Pancreas (tissue), 10 donors: ENCODE measurements at regions of chr14 and their contacts with region 1.

Region 1: DNA sequence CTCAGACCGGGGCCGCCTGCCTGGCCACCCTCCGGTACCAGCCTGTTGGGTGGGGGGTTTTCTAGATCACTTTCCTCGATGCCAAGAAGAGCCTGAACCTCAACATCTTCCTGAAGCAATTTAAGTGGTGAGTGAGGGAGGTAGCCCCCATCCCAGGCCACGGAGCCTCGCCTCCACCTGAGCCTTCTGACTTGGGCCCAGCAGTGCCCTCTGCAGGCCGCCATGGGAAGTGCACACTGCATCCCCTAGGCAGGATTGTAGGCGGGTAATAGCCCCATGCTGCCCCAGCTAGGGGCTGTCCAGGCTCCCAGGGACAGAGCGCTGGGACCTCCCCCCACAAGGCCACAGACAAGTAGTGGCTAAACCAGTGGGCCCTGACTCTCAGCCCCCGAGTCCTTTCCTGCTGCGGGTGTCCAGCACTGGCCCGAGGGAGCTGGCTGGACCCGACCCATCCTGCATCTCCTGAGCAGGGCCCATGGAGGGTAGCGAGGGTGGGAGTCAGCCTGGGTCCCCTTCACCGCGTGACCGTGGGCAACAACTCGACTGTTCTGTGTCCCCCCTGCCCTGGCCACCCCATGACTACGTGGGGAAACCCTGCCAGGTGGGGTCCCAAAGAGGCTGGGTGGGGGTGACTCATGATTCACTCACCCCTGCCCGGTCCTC is 15.3 kb upstream of the ADSS1 start:
- DNase-seq: peak in 5 of 6 donors; percentile 45 to 90 (median 77)
- ATAC-seq: peak; percentile 71 to 93 (median 86)
- H3K4me3 ChIP-seq: no peak overlapping the region
- H3K27ac ChIP-seq: no peak overlapping the region
- H3K4me1 ChIP-seq: no peaks in the 10 kb centered on the region
- H3K27me3 ChIP-seq: no peaks in the 10 kb centered on the region
- CTCF ChIP-seq: peak; percentile 97 to 99 (median 98)

Region 2: GRCh38 chr14:104650057-104650981 is 58.4 kb before region 1 on chr14:
- intact Hi-C with region 1: loop called (anchors 5 to 10 kb)
- DNase-seq: peak; percentile 39 to 87 (median 68)
- ATAC-seq: peak; percentile 75 to 96 (median 92)
- H3K4me3 ChIP-seq: peak overlapping the region in 2 of 4 donors; percentile 30 to 41
- H3K27ac ChIP-seq: no peak overlapping the region
- H3K4me1 ChIP-seq: no peaks in the 10 kb centered on the region
- H3K27me3 ChIP-seq: no peaks in the 10 kb centered on the region
- CTCF ChIP-seq: peak; percentile 83 to 98 (median 94)

Region 3: DNA sequence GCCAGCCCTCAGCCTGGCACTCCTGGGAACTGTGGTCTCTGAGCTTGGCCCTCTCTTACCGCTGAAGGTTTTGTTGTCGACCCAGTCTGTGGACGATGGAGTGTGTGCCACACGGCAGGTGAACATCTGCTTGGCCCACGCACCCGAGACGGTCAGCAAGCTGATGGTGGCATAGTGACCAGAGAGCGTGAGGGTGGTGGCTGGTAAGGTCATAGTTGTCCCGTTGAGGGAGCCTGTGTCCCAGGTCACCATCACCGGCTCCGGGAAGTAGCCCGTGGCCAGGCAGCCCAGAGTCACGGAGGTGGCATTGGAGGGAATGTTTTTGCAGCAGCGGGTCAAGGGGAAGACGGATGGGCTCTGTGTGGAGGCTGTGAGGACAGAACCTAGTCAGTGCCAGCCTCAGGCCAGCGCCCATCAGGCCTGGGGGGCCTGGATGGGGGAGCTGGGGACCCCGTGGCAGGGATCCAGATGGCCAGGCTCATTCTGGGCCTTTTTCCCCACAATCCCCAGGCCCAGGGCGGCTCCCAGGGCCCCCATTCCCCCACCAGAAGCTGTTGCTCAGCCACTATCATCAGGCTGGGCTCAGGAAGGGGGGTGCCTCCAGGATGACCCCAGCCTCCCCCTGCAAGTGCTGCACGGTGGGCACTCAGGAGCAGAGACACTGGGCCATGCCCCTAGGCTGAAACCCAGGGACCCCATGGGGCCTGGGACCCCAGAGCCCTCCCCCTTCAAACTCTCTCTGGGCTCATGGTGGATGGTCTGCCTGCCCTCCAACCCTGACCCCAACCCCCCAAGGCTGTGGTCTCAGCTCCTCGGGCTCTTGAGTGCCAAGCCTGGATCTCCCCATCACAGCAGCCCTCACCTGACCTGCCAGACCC is 892.9 kb after region 1 on chr14:
- intact Hi-C with region 1: no loop called
- DNase-seq: peak in 1 of 6 donors; percentile 47
- ATAC-seq: no peak
- H3K4me3 ChIP-seq: no peak overlapping the region
- H3K27ac ChIP-seq: no peak overlapping the region
- H3K4me1 ChIP-seq: no peaks in the 10 kb centered on the region
- H3K27me3 ChIP-seq: no peaks in the 10 kb centered on the region
- CTCF ChIP-seq: no peak